PC-3 (cell line): ENCODE measurements at regions of chr21 and their contacts with region 1.

Region 1: DNA sequence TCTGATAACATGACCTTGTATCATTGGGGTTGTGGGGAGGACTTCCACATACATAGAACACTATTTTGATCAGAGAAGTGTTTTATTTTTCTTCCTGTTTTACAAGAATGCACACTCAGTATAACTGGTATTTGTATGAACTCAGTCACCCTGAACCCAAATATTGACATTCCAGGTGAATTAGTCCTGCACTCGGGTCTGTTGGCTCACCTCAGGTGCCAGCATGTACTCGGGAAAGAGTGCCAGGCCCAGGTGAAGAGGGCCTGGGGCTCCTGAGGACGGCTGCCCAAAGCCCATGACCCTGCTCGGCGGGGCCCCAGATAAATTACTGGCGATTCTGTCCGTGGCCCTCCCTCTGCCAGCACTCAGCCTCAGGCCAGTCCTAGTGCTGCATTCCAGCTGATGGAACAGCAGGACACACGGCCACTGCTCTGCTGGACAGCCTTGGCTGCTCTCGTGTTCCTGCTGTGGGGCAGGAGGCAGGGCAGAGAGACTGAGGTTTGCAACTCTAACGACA is 75.4 kb upstream of the TMPRSS2 start:
- DNase-seq: peak; percentile 96
- ATAC-seq: peak; percentile 61
- H3K4me3 ChIP-seq: peak overlapping the region; percentile 31
- H3K27ac ChIP-seq: peak overlapping the region; percentile 98
- H3K4me1 ChIP-seq: peaks cover 54% of the 10 kb centered on the region
- H3K27me3 ChIP-seq: no peaks in the 10 kb centered on the region
- CTCF ChIP-seq: no peak

Region 2: DNA sequence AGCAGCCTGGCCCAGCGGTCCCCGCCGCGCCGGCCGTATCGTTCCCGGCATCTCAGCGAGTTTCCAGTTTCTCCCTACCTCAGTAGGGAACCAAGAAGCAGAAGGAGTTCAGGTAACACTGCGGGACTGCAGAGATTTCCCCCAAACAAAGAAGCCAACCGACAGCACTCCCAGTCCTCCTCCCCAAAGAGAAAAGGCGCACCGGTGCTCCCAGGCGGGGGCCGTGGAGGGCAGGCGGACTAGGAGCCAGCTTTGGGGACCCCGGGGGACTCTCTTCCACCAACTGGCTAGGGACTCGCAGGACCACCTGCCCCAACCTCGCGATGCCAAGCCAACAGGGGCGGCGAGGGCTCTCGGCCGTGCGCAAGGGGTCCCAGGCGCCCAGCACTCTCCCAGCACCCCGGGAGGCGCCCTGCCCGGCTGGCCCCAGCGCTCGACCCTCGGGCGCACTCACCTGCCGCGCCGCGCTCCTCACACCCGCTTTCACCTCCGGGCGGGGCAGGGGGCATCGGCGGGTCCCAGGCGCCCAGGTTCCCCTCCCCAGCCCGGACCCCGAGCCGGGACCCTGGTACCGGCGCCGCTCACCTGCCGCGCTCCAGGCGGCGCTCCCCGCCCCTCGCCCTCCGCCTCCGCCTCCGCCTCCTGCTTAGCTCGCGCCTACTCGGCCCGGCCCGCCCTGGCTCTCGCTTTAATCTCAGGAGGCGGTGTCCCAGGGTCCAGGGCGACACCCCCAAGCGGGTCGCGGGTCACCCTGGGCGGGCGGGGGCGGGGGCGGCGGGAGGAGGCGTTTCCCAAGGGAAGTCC is 75.6 kb before region 1 on chr21 and contains the start of gene TMPRSS2:
- CTCF ChIA-PET with region 1: interaction called, 4 read pairs
- POLR2A ChIA-PET with region 1: interaction called, 7 read pairs
- intact Hi-C with region 1: loop called (anchors 1 kb)
- DNase-seq: peak; percentile 68
- ATAC-seq: peak; percentile 80
- H3K4me3 ChIP-seq: peak within 1 kb of the TSS; percentile 83
- H3K27ac ChIP-seq: peak within 1 kb of the TSS; percentile 12; the same call in 1 of the 2 replicates
- H3K4me1 ChIP-seq: peaks cover 24% of the 10 kb centered on the region
- H3K27me3 ChIP-seq: no peaks in the 10 kb centered on the region
- CTCF ChIP-seq: no peak
- total RNA-seq, gene TMPRSS2: 9.3 and 15.8 TPM in 2 replicates

Region 3: DNA sequence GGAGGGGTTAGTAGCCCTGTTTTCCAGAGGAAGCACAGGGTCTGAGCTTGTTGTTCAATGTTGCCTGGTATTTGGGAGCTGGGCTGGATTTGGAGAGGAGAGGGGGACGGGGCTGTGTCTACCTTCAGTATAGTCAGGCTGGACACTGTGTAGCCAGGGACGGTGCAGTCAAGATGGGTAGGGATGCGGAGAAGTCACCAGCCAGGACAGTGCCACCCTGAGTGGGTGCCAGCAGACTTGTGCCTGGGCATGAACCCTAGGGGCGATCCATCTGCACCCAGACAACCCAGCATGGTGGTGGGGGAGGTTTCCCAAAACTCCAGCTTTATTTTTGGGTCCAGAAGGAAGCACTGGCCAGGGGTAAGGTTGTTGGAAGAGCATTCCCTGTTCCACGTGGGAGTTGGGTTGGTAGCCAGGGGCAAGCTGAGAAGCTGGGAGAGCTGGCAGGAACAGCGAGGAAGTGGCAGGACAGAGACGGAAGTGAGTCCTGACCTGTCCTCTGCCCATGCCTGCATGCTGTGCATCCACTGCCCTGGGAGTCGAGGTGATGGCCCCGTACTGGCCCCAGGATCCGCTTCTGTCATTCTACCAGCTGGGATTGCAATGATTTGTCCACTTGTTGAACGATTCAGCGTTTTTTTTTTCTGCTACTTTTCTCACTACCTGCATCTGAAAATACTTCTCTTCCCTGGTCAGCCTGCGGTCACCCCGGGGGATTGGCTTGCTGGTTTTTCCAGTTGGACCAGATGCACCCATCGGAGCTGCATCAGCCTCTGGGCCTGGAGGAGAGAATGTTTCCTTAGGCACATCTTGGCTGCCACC is 47.3 kb before region 1 on chr21:
- CTCF ChIA-PET with region 1: no interaction called
- POLR2A ChIA-PET with region 1: no interaction called
- intact Hi-C with region 1: loop called (anchors 5 kb)
- DNase-seq: peak; percentile 91
- ATAC-seq: peak; percentile 88
- H3K4me3 ChIP-seq: peak overlapping the region; percentile 40; the same call in 1 of the 2 replicates
- H3K27ac ChIP-seq: peak overlapping the region; percentile 52
- H3K4me1 ChIP-seq: peaks cover 15% of the 10 kb centered on the region
- H3K27me3 ChIP-seq: no peaks in the 10 kb centered on the region
- CTCF ChIP-seq: no peak

Region 4: DNA sequence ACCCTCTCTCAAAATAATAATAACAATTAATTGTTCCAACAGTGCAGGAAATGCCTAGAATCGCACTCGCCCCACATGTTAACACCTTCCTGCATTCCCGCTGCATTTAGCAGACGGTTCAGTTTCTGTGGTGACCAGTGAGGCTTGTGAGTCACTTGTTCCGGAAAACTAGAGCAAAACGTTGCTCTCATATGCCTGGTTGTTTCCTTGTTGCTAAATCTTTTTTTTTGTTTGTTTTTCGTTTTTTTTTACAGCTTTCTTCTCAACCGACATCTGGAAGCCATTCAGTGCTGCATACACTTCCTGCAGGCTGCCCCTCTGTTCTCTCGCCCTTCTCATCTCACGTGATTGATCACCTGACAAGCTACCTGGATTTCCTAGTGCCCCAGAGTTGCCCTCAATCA is 18.5 kb before region 1 on chr21:
- CTCF ChIA-PET with region 1: no interaction called
- POLR2A ChIA-PET with region 1: interaction called, 4 read pairs
- intact Hi-C with region 1: loop called (anchors 2 kb)
- DNase-seq: peak; percentile 45
- ATAC-seq: peak; percentile 67
- H3K4me3 ChIP-seq: no peak overlapping the region
- H3K27ac ChIP-seq: no peak overlapping the region
- H3K4me1 ChIP-seq: 0 out of 2 replicates have a peak, but pooled peaks cover 3% of the 10 kb centered on the region
- H3K27me3 ChIP-seq: no peaks in the 10 kb centered on the region
- CTCF ChIP-seq: no peak

Region 5: DNA sequence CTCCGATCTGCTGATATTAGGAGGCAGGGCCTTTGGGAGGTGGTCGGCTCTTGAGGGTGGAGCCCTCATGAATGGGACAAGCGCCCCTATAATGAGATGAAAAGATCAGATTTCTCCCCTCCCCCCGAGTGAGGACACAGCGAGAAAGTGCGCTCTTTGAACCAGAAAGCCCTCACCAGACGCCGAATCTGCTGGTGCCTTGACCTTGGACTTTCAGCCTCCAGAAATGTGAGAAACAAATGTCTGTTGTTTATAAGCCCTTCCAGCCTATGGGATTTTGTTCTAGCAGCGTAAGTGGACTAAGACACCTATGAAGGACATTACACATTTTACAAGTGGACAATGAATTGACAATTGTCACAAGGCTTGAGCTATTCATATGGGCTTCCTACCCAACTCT is 103.3 kb after region 1 on chr21:
- CTCF ChIA-PET with region 1: no interaction called
- POLR2A ChIA-PET with region 1: no interaction called
- intact Hi-C with region 1: no loop called
- DNase-seq: no peak
- ATAC-seq: no peak
- H3K4me3 ChIP-seq: no peak overlapping the region
- H3K27ac ChIP-seq: peak overlapping the region; percentile 98
- H3K4me1 ChIP-seq: peaks cover 68% of the 10 kb centered on the region
- H3K27me3 ChIP-seq: no peaks in the 10 kb centered on the region
- CTCF ChIP-seq: no peak